ENCODE measurements at regions of chr4 and their contacts with region 1.

Region 1: DNA sequence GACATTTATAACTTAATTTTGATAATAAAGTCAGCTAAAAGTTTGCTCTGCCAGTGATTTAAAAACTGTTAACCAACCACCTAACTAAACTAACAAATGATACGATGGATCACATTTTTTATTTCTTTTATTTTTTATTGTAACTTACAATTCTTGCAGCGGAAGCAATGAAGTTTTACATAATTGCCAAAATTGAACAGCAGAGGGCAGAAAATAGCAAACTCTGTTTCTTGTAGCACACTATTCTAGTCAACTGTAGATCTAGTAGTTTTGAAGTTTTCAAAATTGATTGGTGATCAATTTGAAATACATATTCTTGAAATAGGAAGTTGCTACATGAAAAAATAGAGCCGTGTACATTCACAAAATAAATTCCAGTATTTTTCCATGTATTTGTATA is 2.8 kb upstream of the GRIA2 start:
- DNase-seq: no peak
- ATAC-seq: no peak
- H3K4me3 ChIP-seq: no peak overlapping the region
- H3K4me3 Mint-ChIP-seq: no peak overlapping the region
- H3K27ac ChIP-seq: no peak overlapping the region
- H3K27ac Mint-ChIP-seq: no peak overlapping the region
- H3K4me1 ChIP-seq: no peaks in the 10 kb centered on the region
- H3K4me1 Mint-ChIP-seq: peaks cover 0 to 5% (median 0%) of the 10 kb centered on the region in 7 donors
- H3K27me3 ChIP-seq: no peaks in the 10 kb centered on the region
- H3K27me3 Mint-ChIP-seq: peaks cover 28 to 34% (median 32%) of the 10 kb centered on the region in 5 donors

Region 2: DNA sequence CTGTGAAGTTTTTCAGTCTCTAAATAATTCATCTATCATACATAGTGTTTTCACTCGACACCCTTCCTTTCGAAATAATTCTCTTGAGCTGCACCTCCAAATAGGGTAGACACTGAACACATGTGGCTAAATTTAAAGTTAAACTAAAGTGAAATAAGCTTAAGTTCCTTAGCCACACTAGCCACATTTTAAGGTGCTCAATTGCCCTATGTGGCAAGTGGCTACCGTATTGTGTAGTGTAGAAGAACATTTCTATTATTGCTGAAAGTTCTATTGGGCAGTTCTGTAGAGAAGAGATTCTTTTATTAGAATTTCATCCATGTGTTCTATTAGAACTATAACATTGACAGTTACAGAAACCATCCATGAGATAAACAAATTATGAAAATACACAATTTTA is 1157.0 kb before region 1 on chr4:
- CTCF ChIA-PET with region 1: no interaction called
- POLR2A ChIA-PET with region 1: no interaction called
- intact Hi-C with region 1: no loop called
- DNase-seq: no peak
- ATAC-seq: no peak
- H3K4me3 ChIP-seq: no peak overlapping the region
- H3K4me3 Mint-ChIP-seq: no peak overlapping the region
- H3K27ac ChIP-seq: no peak overlapping the region
- H3K27ac Mint-ChIP-seq: no peak overlapping the region
- H3K4me1 ChIP-seq: no peaks in the 10 kb centered on the region
- H3K4me1 Mint-ChIP-seq: no peaks in the 10 kb centered on the region
- H3K27me3 ChIP-seq: no peaks in the 10 kb centered on the region
- H3K27me3 Mint-ChIP-seq: no peaks in the 10 kb centered on the region

Region 3: DNA sequence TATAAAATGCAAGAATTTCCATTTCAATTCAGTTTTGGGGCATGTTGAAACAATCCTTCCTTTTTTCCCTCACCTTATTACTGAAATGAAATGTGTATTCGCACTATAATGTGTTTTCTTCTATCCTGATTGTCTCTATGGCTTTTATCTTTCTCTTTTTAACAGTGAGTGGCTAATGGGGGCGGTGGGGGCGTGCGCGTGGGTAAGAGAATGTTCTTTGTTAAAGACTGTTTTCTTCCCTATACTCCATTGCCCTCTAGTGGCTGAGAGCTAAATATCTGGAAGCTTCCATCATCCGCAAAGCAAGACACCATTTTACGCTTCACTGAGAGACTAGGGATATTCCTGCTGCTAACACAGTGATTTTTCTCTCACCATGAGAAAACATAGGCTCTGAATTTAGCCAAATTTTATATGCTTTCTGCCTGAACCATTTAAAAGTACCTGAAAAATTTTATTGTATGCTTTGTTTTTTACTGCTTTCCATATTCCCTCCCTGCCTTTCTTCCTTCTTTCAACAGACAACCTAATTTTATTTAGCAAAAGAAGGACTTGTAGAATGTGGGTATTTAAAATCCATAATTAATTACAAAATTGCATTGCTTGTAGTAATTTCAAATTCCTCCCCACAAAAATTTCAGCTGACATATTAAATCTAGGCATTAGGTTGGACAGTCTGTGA is 761.1 kb after region 1 on chr4:
- CTCF ChIA-PET with region 1: no interaction called
- POLR2A ChIA-PET with region 1: no interaction called
- intact Hi-C with region 1: loop called in 1 of 2 experiments (anchors 2 kb)
- DNase-seq: peak in 6 of 9 donors; percentile 7 to 28 (median 18)
- ATAC-seq: peak; percentile 79
- H3K4me3 ChIP-seq: no peak overlapping the region
- H3K4me3 Mint-ChIP-seq: peak overlapping the region in 3 of 10 donors; percentile 21 to 46 (median 22)
- H3K27ac ChIP-seq: no peak overlapping the region
- H3K27ac Mint-ChIP-seq: no peak overlapping the region
- H3K4me1 ChIP-seq: no peaks in the 10 kb centered on the region
- H3K4me1 Mint-ChIP-seq: peaks cover 0 to 6% (median 4%) of the 10 kb centered on the region in 7 donors
- H3K27me3 ChIP-seq: no peaks in the 10 kb centered on the region
- H3K27me3 Mint-ChIP-seq: peaks cover 3 to 20% (median 9%) of the 10 kb centered on the region in 5 donors